ENCODE measurements at regions of chr7 and their contacts with region 1.

Region 1: GRCh38 chr7:143085109-143085508 is 33.0 kb downstream of the OR6V1 start:
- DNase-seq: peak; percentile 86
- ATAC-seq: peak; percentile 96
- H3K4me3 ChIP-seq: peak overlapping the region in 2 of 5 experiments; percentile 5 to 46
- H3K4me3 Mint-ChIP-seq: peak overlapping the region; percentile 68
- H3K27ac ChIP-seq: peak overlapping the region; percentile 73 to 84
- H3K27ac Mint-ChIP-seq: peak overlapping the region; percentile 84
- H3K4me1 ChIP-seq: peaks cover 34 to 40% of the 10 kb centered on the region in 2 donors
- H3K4me1 Mint-ChIP-seq: peaks cover 47% of the 10 kb centered on the region
- H3K27me3 ChIP-seq: no peaks in the 10 kb centered on the region
- H3K27me3 Mint-ChIP-seq: no peaks in the 10 kb centered on the region
- CTCF ChIP-seq: no peak

Region 2: GRCh38 chr7:143013893-143014292 is 71.2 kb before region 1 on chr7:
- CTCF ChIA-PET with region 1: interaction called, 11 read pairs
- POLR2A ChIA-PET with region 1: no interaction called
- intact Hi-C with region 1: loop called (anchors 2 kb)
- DNase-seq: no peak
- ATAC-seq: no peak
- H3K4me3 ChIP-seq: no peak overlapping the region
- H3K4me3 Mint-ChIP-seq: peak overlapping the region; percentile 84
- H3K27ac ChIP-seq: peak overlapping the region in 1 of 2 donors; percentile 81
- H3K27ac Mint-ChIP-seq: no peak overlapping the region
- H3K4me1 ChIP-seq: peaks cover 75 to 83% of the 10 kb centered on the region in 2 donors
- H3K4me1 Mint-ChIP-seq: peaks cover 84% of the 10 kb centered on the region
- H3K27me3 ChIP-seq: no peaks in the 10 kb centered on the region
- H3K27me3 Mint-ChIP-seq: no peaks in the 10 kb centered on the region
- CTCF ChIP-seq: no peak

Region 3: GRCh38 chr7:143042159-143042789 is 42.8 kb before region 1 on chr7:
- CTCF ChIA-PET with region 1: no interaction called
- POLR2A ChIA-PET with region 1: no interaction called
- intact Hi-C with region 1: no loop called
- DNase-seq: no peak
- ATAC-seq: no peak
- H3K4me3 ChIP-seq: no peak overlapping the region
- H3K4me3 Mint-ChIP-seq: no peak overlapping the region
- H3K27ac ChIP-seq: no peak overlapping the region
- H3K27ac Mint-ChIP-seq: no peak overlapping the region
- H3K4me1 ChIP-seq: peaks cover 8 to 9% of the 10 kb centered on the region in 2 donors
- H3K4me1 Mint-ChIP-seq: peaks cover 21% of the 10 kb centered on the region
- H3K27me3 ChIP-seq: no peaks in the 10 kb centered on the region
- H3K27me3 Mint-ChIP-seq: no peaks in the 10 kb centered on the region
- CTCF ChIP-seq: no peak

Region 4: DNA sequence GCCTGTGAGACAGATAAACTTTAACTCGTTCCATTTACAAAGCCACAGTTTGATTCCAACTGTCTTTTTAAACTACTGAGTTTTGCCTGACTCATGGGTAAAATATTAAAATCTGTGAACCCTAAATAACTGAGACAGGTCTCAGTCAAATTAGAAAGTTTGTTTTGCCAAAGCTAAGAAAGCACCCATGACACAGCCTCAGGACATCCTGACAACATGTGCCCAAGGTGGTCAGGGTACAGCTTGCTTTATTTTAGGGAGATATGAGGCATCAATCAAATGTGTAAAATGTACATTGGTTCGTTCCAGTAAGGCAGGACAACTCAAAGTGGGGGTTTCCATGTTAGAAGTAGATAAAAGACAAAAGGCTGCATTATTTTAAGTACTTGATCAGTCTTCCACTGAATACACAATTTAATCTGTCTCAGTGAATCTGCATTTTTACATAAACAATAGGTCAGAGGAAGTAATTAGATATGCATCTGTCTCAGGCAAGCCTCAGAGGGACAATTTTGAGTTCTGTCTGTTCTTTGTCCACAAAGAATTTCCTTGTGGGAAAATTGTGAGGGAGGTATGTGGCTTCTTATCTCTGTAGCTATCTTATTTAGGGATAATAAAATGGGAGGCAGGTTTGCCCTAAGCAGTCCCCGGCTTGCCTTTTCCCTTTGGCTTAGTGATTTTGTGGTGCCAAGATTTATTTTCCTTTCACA is 35.7 kb after region 1 on chr7:
- CTCF ChIA-PET with region 1: no interaction called
- POLR2A ChIA-PET with region 1: no interaction called
- intact Hi-C with region 1: loop called (anchors 5 kb)
- DNase-seq: no peak
- ATAC-seq: no peak
- H3K4me3 ChIP-seq: no peak overlapping the region
- H3K4me3 Mint-ChIP-seq: peak overlapping the region; percentile 18
- H3K27ac ChIP-seq: no peak overlapping the region
- H3K27ac Mint-ChIP-seq: peak overlapping the region; percentile 67
- H3K4me1 ChIP-seq: peaks cover 19 to 22% of the 10 kb centered on the region in 2 donors
- H3K4me1 Mint-ChIP-seq: peaks cover 34% of the 10 kb centered on the region
- H3K27me3 ChIP-seq: no peaks in the 10 kb centered on the region
- H3K27me3 Mint-ChIP-seq: no peaks in the 10 kb centered on the region
- CTCF ChIP-seq: no peak

Region 5: GRCh38 chr7:143205560-143206293 is 120.6 kb after region 1 on chr7:
- CTCF ChIA-PET with region 1: no interaction called
- POLR2A ChIA-PET with region 1: interaction called, 6 read pairs
- intact Hi-C with region 1: loop called (anchors 5 kb)
- DNase-seq: peak; percentile 86
- ATAC-seq: peak; percentile 86
- H3K4me3 ChIP-seq: peak overlapping the region in 4 of 5 experiments; percentile 21 to 50 (median 34)
- H3K4me3 Mint-ChIP-seq: peak overlapping the region; percentile 63
- H3K27ac ChIP-seq: peak overlapping the region; percentile 0 to 64
- H3K27ac Mint-ChIP-seq: peak overlapping the region; percentile 59
- H3K4me1 ChIP-seq: peaks cover 25 to 29% of the 10 kb centered on the region in 2 donors
- H3K4me1 Mint-ChIP-seq: peaks cover 40% of the 10 kb centered on the region
- H3K27me3 ChIP-seq: no peaks in the 10 kb centered on the region
- H3K27me3 Mint-ChIP-seq: no peaks in the 10 kb centered on the region
- CTCF ChIP-seq: no peak